ENCODE measurements at regions of chr1 and their contacts with region 1.

Region 1: DNA sequence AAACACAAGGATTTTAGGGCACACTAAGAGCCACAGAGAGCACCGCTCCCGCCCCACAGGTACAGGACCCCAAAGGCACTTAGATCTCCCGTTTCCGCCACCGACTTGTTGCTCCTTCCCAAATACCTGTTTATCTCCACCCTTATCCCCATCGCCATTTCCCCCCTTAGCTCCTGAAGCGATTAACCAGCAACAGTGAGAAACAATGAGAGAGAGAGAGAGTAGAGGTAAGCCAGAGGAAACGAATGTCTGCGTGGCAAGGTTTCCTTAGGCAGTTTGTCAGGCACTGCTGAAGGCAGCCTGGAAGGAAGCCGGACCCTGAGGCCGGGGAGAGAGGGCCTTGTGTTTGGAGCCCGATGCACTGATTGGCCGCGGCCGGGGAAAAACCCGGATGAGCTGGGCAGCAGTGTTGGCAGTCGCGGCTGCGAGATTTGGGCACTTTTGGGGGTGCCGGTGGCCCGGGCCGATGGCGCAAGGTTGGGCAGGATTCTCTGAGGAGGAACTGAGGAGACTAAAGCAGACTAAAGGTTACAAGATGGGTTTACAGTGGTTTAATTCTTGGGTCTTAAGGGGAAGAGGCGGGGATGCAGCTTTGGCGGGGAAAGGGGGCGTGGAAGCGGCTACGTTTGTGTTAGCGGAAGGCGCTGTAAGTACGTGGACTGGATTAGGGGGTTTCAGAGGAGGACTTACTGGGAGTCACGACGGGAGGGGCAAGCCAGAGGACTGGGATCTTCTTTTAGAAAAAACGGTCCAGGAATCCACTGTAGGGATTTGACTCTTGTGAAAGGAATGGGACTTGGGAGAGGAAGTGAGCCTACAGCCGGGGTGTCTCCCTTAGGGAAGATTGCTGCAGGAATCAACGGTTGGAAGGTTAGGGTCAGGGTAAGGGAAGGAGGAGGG is at the start of gene GORAB:
- DNase-seq: peak; percentile 79 to 83
- H3K4me3 ChIP-seq: peak within 1 kb of the TSS; percentile 80
- H3K27ac ChIP-seq: peak within 1 kb of the TSS; percentile 86
- H3K4me1 ChIP-seq: peaks cover 14% of the 10 kb centered on the region
- H3K27me3 ChIP-seq: no peaks in the 10 kb centered on the region
- CTCF ChIP-seq: no peak
- total RNA-seq, gene GORAB: 6.8 and 8.4 TPM in 2 replicates

Region 2: GRCh38 chr1:169893494-169894362 is 638.3 kb before region 1 on chr1 and contains the start of gene SCYL3:
- CTCF ChIA-PET with region 1: no interaction called
- POLR2A ChIA-PET with region 1: no interaction called
- intact Hi-C with region 1: loop called (anchors 10 kb)
- DNase-seq: peak; percentile 88 to 89
- H3K4me3 ChIP-seq: peak within 1 kb of the TSS; percentile 68
- H3K27ac ChIP-seq: peak within 1 kb of the TSS; percentile 91
- H3K4me1 ChIP-seq: peaks cover 33% of the 10 kb centered on the region
- H3K27me3 ChIP-seq: no peaks in the 10 kb centered on the region
- CTCF ChIP-seq: no peak
- total RNA-seq, gene SCYL3: 7.5 and 7.8 TPM in 2 replicates

Region 3: GRCh38 chr1:169933984-169934725 is 597.9 kb before region 1 on chr1:
- CTCF ChIA-PET with region 1: no interaction called
- POLR2A ChIA-PET with region 1: no interaction called
- intact Hi-C with region 1: loop called (anchors 5 kb)
- DNase-seq: peak; percentile 37 to 38
- H3K4me3 ChIP-seq: no peak overlapping the region
- H3K27ac ChIP-seq: no peak overlapping the region
- H3K4me1 ChIP-seq: no peaks in the 10 kb centered on the region
- H3K27me3 ChIP-seq: no peaks in the 10 kb centered on the region
- CTCF ChIP-seq: no peak

Region 4: GRCh38 chr1:170562646-170563338 is 30.8 kb after region 1 on chr1:
- CTCF ChIA-PET with region 1: interaction called, 8 read pairs
- POLR2A ChIA-PET with region 1: interaction called, 4 read pairs
- intact Hi-C with region 1: loop called (anchors 1 kb)
- DNase-seq: peak; percentile 65 to 69
- H3K4me3 ChIP-seq: no peak overlapping the region
- H3K27ac ChIP-seq: peak overlapping the region; percentile 55
- H3K4me1 ChIP-seq: peaks cover 17% of the 10 kb centered on the region
- H3K27me3 ChIP-seq: no peaks in the 10 kb centered on the region
- CTCF ChIP-seq: no peak

Region 5: DNA sequence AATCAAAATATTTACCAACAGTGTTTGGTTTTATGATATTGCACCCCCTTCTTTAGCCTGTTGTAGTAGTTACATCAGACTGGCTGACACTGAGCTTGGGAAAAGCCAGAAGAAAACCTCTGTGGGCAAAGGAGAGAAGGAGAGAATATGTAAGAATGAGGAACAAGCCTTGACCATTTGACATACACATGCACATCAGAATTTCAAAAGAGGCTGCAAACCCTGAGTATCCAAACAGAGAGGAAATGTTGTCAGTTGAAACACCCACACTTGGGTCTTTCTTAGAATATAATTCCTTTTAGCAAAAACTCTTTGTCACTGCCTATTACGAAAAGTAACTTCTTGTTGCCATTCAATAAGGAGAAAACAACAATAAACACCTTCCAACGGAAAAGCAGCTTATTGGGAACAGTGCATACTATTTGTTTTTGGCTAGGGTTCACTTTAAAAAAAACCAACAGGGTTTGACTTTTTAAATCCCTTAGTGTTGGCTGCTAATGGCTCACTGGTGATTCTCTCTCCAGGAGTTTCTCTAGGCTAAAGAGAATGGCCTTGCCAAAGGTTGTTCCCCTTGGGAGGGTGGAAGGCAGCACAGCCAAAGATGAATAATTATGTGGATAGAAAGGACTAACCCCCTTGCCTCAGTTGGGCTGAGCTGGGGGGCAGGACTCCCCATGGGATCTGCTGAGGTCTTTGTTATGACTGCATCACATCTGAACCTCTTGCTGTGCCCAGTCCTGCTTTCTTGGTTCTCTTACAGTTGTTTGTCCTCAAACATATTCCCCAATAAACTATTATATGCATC is 48.8 kb after region 1 on chr1:
- CTCF ChIA-PET with region 1: no interaction called
- POLR2A ChIA-PET with region 1: no interaction called
- intact Hi-C with region 1: no loop called
- DNase-seq: no peak
- H3K4me3 ChIP-seq: no peak overlapping the region
- H3K27ac ChIP-seq: no peak overlapping the region
- H3K4me1 ChIP-seq: peaks cover 1% of the 10 kb centered on the region; the same call in 1 of the 2 replicates
- H3K27me3 ChIP-seq: no peaks in the 10 kb centered on the region
- CTCF ChIP-seq: no peak